ENCODE measurements at regions of chr4 and their contacts with region 1.

Region 1: GRCh38 chr4:89230271-89230670 is 77.3 kb downstream of the GPRIN3 start:
- DNase-seq: no peak
- H3K4me3 ChIP-seq: no peak overlapping the region
- H3K27ac ChIP-seq: no peak overlapping the region
- H3K4me1 ChIP-seq: peaks cover 0 to 6% (median 2%) of the 10 kb centered on the region in 6 donors
- H3K27me3 ChIP-seq: no peaks in the 10 kb centered on the region
- CTCF ChIP-seq: no peak
- POLR2A ChIP-seq: no peak

Region 2: GRCh38 chr4:88803600-88804096 is 426.6 kb before region 1 on chr4:
- intact Hi-C with region 1: no loop called
- DNase-seq: no peak
- H3K4me3 ChIP-seq: no peak overlapping the region
- H3K27ac ChIP-seq: peak overlapping the region in 4 of 8 donors; percentile 43 to 71 (median 67)
- H3K4me1 ChIP-seq: peaks cover 0 to 26% (median 2%) of the 10 kb centered on the region in 6 donors
- H3K27me3 ChIP-seq: no peaks in the 10 kb centered on the region
- CTCF ChIP-seq: no peak
- POLR2A ChIP-seq: no peak

Region 3: DNA sequence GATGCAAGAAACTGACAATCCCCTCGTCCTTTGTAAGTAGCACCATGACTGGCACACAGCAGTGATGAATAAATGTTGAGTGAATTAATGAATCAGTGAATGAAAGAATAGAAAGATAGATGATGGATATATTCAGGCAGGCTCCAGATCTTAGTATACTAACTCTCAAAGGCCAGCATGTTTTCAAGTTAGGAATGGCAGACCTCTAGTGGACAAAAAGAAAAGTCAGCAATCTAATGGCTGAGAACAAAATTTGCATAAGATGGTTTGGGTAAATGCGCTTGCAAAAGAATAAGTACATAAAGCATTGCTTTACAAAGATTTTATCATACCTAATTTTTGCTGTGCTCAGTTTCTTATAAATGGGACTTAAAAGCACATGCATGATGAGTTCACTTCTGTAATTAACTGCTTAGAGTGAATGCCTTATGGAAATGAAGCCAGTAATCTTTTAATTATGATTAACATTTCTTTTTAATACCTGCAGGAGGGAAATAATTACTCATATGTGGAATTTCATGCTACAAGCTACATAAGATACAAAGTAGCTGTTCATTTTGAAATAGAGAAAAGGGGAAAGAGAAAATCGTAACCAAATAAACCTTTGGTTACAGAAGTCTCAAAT is 204.2 kb after region 1 on chr4:
- intact Hi-C with region 1: loop called (anchors 2 kb)
- DNase-seq: no peak
- H3K4me3 ChIP-seq: no peak overlapping the region
- H3K27ac ChIP-seq: no peak overlapping the region
- H3K4me1 ChIP-seq: peaks cover 0 to 18% (median 6%) of the 10 kb centered on the region in 6 donors
- H3K27me3 ChIP-seq: no peaks in the 10 kb centered on the region
- CTCF ChIP-seq: peak; percentile 49 to 78 (median 72)
- POLR2A ChIP-seq: no peak

Region 4: DNA sequence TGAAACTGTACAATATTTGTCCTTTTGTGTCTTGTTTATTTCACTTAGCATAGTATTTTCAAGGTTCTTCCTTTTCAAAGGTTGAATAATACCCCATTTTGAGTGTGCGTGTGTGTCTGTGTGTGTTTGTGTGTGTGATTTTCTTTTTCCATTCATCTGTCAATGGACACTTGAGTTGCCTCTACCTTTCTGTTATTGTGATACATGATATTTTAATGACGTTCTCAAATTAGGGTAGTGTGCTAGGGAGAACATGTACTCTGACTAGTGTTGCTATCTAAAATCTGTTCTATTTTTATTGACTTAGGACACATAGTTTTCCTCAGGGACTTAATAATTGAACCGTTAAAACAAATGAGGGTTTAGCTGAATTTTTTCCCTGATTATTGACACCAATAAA is 674.3 kb after region 1 on chr4:
- intact Hi-C with region 1: loop called (anchors 5 kb)
- DNase-seq: no peak
- H3K4me3 ChIP-seq: no peak overlapping the region
- H3K27ac ChIP-seq: no peak overlapping the region
- H3K4me1 ChIP-seq: peaks cover 0 to 4% (median 0%) of the 10 kb centered on the region in 6 donors
- H3K27me3 ChIP-seq: no peaks in the 10 kb centered on the region
- CTCF ChIP-seq: no peak
- POLR2A ChIP-seq: no peak

Measured in spleen (tissue), 13 donors.